ENCODE measurements at regions of chr20 and their contacts with region 1.

Region 1: GRCh38 chr20:39874049-39874888 is 814.8 kb downstream of the MAFB start:
- DNase-seq: peak; percentile 62 to 88
- H3K4me3 ChIP-seq: no peak overlapping the region
- H3K27ac ChIP-seq: no peak overlapping the region
- H3K4me1 ChIP-seq: no peaks in the 10 kb centered on the region; a peak in 1 of 7 replicates
- H3K27me3 ChIP-seq: no peaks in the 10 kb centered on the region
- CTCF ChIP-seq: peak; percentile 95 to 98 (median 96)
- EP300 ChIP-seq: no peak
- POLR2A ChIP-seq: no peak
- RAD21 ChIP-seq: peak; percentile 87 to 90

Region 2: GRCh38 chr20:39829256-39829655 is 45.0 kb before region 1 on chr20:
- CTCF ChIA-PET with region 1: interaction called, 36 read pairs
- POLR2A ChIA-PET with region 1: no interaction called
- DNase-seq: peak; percentile 7 to 53
- H3K4me3 ChIP-seq: no peak overlapping the region
- H3K27ac ChIP-seq: no peak overlapping the region
- H3K4me1 ChIP-seq: peaks cover 0 to 6% (median 3%) of the 10 kb centered on the region in 4 experiments; a peak in 4 of 7 replicates
- H3K27me3 ChIP-seq: no peaks in the 10 kb centered on the region
- CTCF ChIP-seq: peak; percentile 59 to 75 (median 69)
- EP300 ChIP-seq: no peak
- POLR2A ChIP-seq: no peak
- RAD21 ChIP-seq: peak; percentile 84

Region 3: DNA sequence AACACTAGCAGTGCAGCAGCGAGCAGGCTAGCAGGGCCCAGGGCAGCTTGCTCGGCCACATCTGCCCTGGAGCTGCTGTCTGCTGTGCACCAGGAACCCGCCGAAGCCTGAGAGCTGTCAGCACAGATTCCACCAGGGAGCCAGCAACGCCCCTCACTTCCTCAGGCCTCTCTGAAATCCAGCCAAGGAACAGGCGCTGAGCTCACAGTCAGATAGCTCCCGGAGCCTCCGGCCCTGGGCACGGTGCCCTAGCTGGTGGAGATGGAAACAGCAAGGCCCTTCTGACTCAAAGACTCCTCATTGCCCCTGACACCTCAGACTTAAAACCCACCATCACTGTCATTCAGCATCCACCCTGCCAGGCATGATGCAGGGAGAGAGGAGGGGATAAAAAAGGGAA is 24.6 kb before region 1 on chr20:
- CTCF ChIA-PET with region 1: interaction called, 25 read pairs
- POLR2A ChIA-PET with region 1: no interaction called
- DNase-seq: no peak
- H3K4me3 ChIP-seq: no peak overlapping the region
- H3K27ac ChIP-seq: no peak overlapping the region
- H3K4me1 ChIP-seq: peaks cover 2 to 12% (median 7%) of the 10 kb centered on the region in 4 experiments; a peak in 4 of 7 replicates
- H3K27me3 ChIP-seq: peaks cover 0 to 2% (median 0%) of the 10 kb centered on the region in 4 experiments; a peak in 2 of 7 replicates
- CTCF ChIP-seq: no peak
- EP300 ChIP-seq: no peak
- POLR2A ChIP-seq: no peak
- RAD21 ChIP-seq: no peak

Region 4: DNA sequence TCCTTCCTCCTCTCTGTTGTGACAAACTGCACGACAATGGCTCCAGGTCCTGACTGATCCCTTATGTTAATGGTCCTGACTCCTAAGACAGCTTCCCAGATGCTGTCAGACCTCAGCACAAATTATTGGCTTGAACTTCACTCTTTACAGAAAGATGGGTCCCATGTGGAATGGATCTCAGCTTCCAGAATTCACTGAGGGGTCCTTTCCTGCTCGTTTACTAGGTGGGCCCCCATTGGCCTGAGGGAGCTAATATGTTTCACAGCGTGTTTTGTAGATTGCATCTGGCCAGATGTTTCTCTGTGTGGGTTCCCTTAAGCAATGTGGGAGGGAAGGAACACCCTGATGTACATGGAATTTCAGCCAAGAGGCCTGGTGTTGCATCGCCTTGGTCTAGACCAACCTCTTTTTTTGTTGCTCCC is 11.8 kb before region 1 on chr20:
- CTCF ChIA-PET with region 1: interaction called, 27 read pairs
- POLR2A ChIA-PET with region 1: no interaction called
- DNase-seq: no peak
- H3K4me3 ChIP-seq: no peak overlapping the region
- H3K27ac ChIP-seq: no peak overlapping the region
- H3K4me1 ChIP-seq: no peaks in the 10 kb centered on the region
- H3K27me3 ChIP-seq: no peaks in the 10 kb centered on the region
- CTCF ChIP-seq: no peak
- EP300 ChIP-seq: no peak
- POLR2A ChIP-seq: no peak
- RAD21 ChIP-seq: no peak